Naive thymus-derived CD4-positive, alpha-beta T cell (primary cell): ENCODE measurements at regions of chr2 and their contacts with region 1.

Region 1: GRCh38 chr2:28835781-28836180 is 25.1 kb downstream of the SPDYA start:
- DNase-seq: no peak
- ATAC-seq: no peak
- H3K4me3 ChIP-seq: no peak overlapping the region
- H3K4me3 Mint-ChIP-seq: no peak overlapping the region
- H3K27ac ChIP-seq: no peak overlapping the region
- H3K27ac Mint-ChIP-seq: no peak overlapping the region
- H3K4me1 ChIP-seq: no peaks in the 10 kb centered on the region
- H3K4me1 Mint-ChIP-seq: no peaks in the 10 kb centered on the region
- H3K27me3 ChIP-seq: no peaks in the 10 kb centered on the region
- H3K27me3 Mint-ChIP-seq: peaks cover 0 to 5% (median 0%) of the 10 kb centered on the region in 5 donors

Region 2: DNA sequence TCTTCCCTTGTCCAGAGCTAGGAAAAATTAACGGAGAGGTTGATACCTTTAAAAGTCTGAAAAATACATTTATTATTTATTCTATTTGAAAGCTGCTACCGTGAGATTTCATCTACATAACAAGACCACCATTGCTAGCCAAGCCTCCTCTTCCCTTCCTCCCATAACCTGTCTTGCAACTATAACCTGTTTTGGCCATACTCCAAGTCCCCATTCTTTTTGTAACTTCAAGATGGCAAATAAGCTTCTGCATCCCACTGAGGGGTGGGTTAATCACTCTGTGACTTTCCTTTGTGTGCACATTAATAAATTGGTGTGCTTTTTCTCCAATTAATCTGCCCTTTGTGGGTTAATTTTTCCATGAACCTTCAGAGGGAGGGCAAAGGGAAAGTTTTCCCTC is 706.0 kb after region 1 on chr2:
- CTCF ChIA-PET with region 1: no interaction called
- POLR2A ChIA-PET with region 1: no interaction called
- intact Hi-C with region 1: no loop called
- DNase-seq: no peak
- ATAC-seq: no peak
- H3K4me3 ChIP-seq: no peak overlapping the region
- H3K4me3 Mint-ChIP-seq: no peak overlapping the region
- H3K27ac ChIP-seq: no peak overlapping the region
- H3K27ac Mint-ChIP-seq: no peak overlapping the region
- H3K4me1 ChIP-seq: no peaks in the 10 kb centered on the region
- H3K4me1 Mint-ChIP-seq: no peaks in the 10 kb centered on the region
- H3K27me3 ChIP-seq: no peaks in the 10 kb centered on the region
- H3K27me3 Mint-ChIP-seq: peaks cover 11 to 33% (median 18%) of the 10 kb centered on the region in 5 donors

Region 3: GRCh38 chr2:30072250-30072842 is 1236.6 kb after region 1 on chr2:
- CTCF ChIA-PET with region 1: no interaction called
- POLR2A ChIA-PET with region 1: no interaction called
- intact Hi-C with region 1: loop called in 1 of 2 experiments (anchors 5 kb)
- DNase-seq: peak; percentile 5 to 47 (median 40)
- ATAC-seq: peak; percentile 76
- H3K4me3 ChIP-seq: no peak overlapping the region
- H3K4me3 Mint-ChIP-seq: no peak overlapping the region
- H3K27ac ChIP-seq: no peak overlapping the region
- H3K27ac Mint-ChIP-seq: no peak overlapping the region
- H3K4me1 ChIP-seq: no peaks in the 10 kb centered on the region
- H3K4me1 Mint-ChIP-seq: peaks cover 0 to 3% (median 0%) of the 10 kb centered on the region in 7 donors
- H3K27me3 ChIP-seq: no peaks in the 10 kb centered on the region
- H3K27me3 Mint-ChIP-seq: peaks cover 15 to 45% (median 33%) of the 10 kb centered on the region in 5 donors